ENCODE measurements at regions of chrX and their contacts with region 1.

Region 1: GRCh38 chrX:130079824-130080406 is 30.4 kb downstream of the ELF4 start:
- DNase-seq: peak in 6 of 10 donors; percentile 42 to 89 (median 54)

Region 2: DNA sequence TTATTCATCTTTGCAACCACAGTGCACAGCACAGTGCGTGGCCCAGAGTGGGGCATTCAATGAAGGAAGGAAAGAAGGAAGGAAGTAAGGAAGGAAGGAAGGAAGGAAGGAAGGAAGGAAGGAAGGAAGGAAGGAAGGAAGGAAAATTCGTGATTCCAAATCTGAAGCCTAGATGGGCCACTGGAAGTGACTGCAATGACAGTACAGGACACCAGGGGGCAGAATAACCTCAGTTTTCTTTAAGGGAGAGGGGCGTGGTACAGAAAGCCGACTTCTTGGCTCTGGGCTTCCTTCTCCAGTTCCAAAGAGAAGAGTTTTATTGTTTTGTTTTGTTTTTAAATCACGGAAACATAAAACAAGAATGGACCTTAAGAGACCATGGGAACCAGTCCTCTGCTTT is 473.0 kb before region 1 on chrX:
- intact Hi-C with region 1: no loop called
- DNase-seq: peak in 4 of 10 donors; percentile 35 to 74 (median 52)

Region 3: GRCh38 chrX:130028196-130028595 is 51.7 kb before region 1 on chrX:
- intact Hi-C with region 1: no loop called
- DNase-seq: peak in 4 of 10 donors; percentile 22 to 82 (median 56)

Region 4: DNA sequence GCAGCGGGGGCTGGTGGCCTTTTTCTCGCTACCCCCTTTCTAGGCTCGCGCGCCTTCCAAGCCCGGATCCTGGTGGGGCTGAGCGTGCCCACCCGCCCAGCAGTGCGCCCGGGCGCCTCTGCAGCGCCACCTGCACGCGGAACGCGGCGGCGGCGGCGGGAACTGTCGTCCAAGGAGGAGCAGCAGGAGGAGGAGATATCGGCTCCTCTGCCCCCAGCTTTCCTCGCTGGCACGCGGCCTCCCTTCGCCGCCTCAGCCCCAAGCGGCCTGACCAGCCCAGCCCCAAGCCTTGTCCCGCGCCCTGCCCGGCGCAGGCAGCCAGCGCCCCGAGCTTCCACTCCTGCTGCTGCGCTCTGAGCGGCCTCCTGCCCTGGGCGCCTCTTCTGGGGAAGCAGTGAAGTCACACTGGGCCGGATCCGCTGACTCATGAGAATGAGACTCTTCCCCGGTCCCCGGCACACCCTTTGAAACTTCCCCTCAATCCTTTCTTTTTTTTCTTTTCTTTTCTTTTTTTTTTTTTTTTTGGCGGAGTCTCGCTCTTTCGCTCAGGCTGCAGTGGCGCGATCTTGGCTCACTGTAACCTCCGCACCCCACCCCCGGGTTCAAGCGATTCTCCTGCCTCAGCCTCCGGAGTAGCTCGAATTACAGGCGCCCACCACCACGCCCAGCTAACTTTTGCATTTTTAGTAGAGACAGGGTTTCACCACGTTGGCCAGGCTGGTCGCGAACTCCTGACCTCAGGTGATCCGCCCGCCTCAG is 41.0 kb after region 1 on chrX:
- intact Hi-C with region 1: loop called (anchors 5 kb)
- DNase-seq: peak in 9 of 10 donors; percentile 42 to 94 (median 64)

Region 5: DNA sequence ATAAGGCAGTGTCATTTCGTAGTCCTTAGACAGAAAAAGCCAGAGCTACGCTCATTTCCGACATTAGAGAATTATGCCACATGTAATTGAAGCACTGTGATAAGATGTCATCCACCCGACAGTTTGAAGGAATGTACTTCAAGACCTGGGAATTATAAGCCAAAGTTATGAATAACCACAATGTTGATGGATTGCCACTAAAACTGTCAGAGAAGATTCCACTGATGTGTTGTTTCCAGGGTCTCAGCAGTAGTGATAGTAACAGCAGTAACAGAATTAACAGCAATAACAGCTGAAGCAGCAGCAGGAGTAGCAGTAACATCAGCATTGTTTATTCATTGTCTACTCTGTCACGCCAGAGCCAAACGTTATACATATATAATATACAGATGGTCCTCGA is 116.6 kb after region 1 on chrX:
- intact Hi-C with region 1: loop called (anchors 1 kb)
- DNase-seq: no peak

Measured in posterior cingulate gyrus (tissue), 11 donors.